ENCODE measurements at regions of chr7 and their contacts with region 1.

Region 1: DNA sequence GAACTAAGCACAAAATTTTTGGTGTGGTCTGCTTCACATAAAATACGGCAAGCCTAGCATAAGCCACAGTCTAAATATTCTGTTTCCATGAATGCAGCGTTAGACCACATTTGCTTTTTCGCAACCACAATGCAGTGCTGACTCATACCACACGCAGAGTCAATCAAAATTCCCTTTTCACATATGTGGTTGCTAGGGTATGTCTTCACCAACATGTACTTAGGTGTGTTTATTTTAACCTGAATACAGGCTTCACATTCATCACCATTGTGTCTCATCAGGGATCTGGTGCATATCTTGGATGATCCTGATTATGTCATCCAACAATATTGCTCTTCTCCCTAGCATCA is 90.8 kb downstream of the CHN2 start:
- DNase-seq: peak; percentile 93
- H3K4me3 Mint-ChIP-seq: peak overlapping the region; percentile 51
- H3K27ac Mint-ChIP-seq: peak overlapping the region; percentile 91
- H3K4me1 Mint-ChIP-seq: peaks cover 58% of the 10 kb centered on the region
- H3K27me3 Mint-ChIP-seq: no peaks in the 10 kb centered on the region
- CTCF ChIP-seq: no peak

Region 2: DNA sequence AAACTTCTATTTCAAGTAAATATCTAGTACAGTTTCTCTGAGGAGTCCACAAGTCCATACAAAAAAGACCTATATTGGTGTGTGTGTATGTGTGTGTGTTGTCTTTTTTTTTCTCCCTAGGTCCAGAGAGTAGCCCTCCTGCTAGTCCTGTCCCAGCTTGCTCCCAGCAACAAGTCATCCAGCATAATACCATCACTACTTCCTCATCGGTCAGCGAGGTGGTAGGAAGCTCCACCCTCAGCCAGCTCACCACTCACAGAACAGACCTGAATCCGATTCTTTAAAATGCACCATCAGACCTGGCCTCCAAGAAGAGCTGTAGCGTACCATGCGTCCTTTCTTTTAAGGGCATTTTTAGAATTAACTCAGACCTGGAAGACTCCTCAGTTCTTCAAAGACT is 466.4 kb before region 1 on chr7:
- CTCF ChIA-PET with region 1: no interaction called
- POLR2A ChIA-PET with region 1: no interaction called
- intact Hi-C with region 1: no loop called
- DNase-seq: no peak
- H3K4me3 Mint-ChIP-seq: no peak overlapping the region
- H3K27ac Mint-ChIP-seq: no peak overlapping the region
- H3K4me1 Mint-ChIP-seq: peaks cover 6% of the 10 kb centered on the region
- H3K27me3 Mint-ChIP-seq: no peaks in the 10 kb centered on the region
- CTCF ChIP-seq: no peak

Region 3: GRCh38 chr7:29013082-29013695 is 272.2 kb before region 1 on chr7:
- CTCF ChIA-PET with region 1: no interaction called
- POLR2A ChIA-PET with region 1: no interaction called
- intact Hi-C with region 1: no loop called
- DNase-seq: no peak
- H3K4me3 Mint-ChIP-seq: no peak overlapping the region
- H3K27ac Mint-ChIP-seq: no peak overlapping the region
- H3K4me1 Mint-ChIP-seq: no peaks in the 10 kb centered on the region
- H3K27me3 Mint-ChIP-seq: no peaks in the 10 kb centered on the region
- CTCF ChIP-seq: no peak

Region 4: DNA sequence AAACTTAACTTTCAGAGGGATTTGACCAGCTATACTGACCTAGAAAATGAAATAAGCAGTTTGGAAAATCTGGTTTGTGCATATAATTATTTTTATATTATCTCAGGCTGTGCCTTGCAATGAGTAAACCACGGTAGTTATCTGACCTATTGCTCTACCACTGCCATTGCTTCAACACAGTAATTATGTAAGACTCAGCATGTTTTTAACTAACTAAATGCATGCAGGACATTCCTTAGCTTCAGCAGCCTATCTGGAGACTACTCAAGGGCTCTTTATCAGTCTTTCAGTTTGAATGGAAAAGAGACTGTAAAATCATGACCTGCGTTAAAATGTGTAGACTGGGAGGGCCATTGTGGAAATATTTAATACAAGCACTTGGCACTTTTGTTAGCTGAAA is 68.3 kb before region 1 on chr7:
- CTCF ChIA-PET with region 1: no interaction called
- POLR2A ChIA-PET with region 1: no interaction called
- intact Hi-C with region 1: no loop called
- DNase-seq: no peak
- H3K4me3 Mint-ChIP-seq: no peak overlapping the region
- H3K27ac Mint-ChIP-seq: no peak overlapping the region
- H3K4me1 Mint-ChIP-seq: peaks cover 8% of the 10 kb centered on the region
- H3K27me3 Mint-ChIP-seq: no peaks in the 10 kb centered on the region
- CTCF ChIP-seq: no peak

Region 5: DNA sequence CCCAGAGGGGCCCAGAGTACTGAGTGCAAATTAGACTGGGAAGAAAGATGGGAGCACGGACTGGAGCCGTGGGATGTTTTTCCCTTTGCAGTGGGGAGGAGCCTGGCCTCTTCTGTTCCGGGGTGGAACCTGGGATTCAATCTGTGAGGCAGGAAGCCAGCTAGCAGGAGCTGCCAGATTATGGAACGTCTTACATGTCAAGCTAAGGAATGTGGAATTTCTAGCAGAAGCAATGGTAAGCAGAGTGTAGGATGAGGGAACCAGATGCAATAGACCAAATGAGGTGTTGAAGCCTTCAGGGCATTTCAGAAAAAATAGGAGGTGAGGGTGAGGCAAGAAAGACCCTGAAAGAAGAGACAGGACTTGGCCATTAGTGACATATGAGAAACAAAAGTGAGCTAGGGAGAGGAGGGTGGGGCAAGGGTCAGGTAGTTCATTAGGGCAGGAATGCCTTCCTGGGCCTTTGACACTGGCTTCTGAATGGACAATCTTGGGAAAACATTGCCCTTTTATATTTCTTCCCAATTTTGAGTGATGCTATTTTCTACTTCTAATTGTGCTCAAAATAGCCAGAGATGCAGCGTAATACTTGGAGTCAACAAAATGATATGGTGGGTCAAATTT is 14.7 kb after region 1 on chr7:
- CTCF ChIA-PET with region 1: interaction called, 3 read pairs
- POLR2A ChIA-PET with region 1: interaction called, 13 read pairs
- intact Hi-C with region 1: no loop called
- DNase-seq: no peak
- H3K4me3 Mint-ChIP-seq: no peak overlapping the region
- H3K27ac Mint-ChIP-seq: peak overlapping the region; percentile 13
- H3K4me1 Mint-ChIP-seq: peaks cover 26% of the 10 kb centered on the region
- H3K27me3 Mint-ChIP-seq: no peaks in the 10 kb centered on the region
- CTCF ChIP-seq: no peak

Region 6: DNA sequence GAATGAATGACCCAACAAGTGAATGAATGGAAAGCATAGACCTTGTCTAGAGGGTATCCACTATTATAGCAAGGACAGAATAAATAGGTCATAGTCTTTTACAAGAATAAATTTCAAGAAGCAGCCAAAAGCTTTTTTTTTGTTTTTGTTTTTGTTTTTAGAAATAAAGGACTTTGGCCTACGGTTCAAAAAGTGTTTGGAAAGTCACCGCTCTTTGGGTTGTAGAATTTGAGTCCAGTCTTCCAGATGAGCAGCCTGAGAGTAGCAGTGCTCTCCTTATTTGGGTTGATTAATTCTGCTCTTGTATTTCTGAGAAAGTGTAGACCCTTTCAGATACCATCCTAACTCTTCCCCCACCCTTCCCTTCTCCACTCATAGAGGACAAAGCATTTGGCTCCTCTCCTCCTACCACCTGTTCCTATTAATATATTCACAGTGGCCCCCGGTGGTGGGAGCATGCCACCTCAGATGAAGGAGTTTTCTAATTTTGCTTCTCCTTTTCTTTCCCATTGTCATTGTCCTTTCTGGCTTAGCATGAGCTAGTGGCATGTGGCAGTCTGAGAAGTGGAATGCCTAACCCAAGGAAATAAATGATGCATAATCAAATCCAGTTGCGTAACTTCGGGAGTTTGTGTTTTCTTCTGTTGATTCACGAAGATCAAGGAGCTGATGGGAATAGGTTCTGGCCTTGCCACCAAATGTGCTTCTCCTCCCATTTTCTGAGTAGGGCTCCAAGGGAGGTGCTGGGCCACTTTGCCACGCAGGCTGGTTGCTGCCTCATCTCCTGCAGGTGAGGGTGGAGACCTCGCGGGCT is 23.8 kb after region 1 on chr7:
- CTCF ChIA-PET with region 1: interaction called, 3 read pairs
- POLR2A ChIA-PET with region 1: interaction called, 4 read pairs
- intact Hi-C with region 1: loop called (anchors 2 kb)
- DNase-seq: peak; percentile 4
- H3K4me3 Mint-ChIP-seq: no peak overlapping the region
- H3K27ac Mint-ChIP-seq: no peak overlapping the region
- H3K4me1 Mint-ChIP-seq: peaks cover 27% of the 10 kb centered on the region
- H3K27me3 Mint-ChIP-seq: no peaks in the 10 kb centered on the region
- CTCF ChIP-seq: no peak